ENCODE measurements at regions of chr5 and their contacts with region 1.

Region 1: DNA sequence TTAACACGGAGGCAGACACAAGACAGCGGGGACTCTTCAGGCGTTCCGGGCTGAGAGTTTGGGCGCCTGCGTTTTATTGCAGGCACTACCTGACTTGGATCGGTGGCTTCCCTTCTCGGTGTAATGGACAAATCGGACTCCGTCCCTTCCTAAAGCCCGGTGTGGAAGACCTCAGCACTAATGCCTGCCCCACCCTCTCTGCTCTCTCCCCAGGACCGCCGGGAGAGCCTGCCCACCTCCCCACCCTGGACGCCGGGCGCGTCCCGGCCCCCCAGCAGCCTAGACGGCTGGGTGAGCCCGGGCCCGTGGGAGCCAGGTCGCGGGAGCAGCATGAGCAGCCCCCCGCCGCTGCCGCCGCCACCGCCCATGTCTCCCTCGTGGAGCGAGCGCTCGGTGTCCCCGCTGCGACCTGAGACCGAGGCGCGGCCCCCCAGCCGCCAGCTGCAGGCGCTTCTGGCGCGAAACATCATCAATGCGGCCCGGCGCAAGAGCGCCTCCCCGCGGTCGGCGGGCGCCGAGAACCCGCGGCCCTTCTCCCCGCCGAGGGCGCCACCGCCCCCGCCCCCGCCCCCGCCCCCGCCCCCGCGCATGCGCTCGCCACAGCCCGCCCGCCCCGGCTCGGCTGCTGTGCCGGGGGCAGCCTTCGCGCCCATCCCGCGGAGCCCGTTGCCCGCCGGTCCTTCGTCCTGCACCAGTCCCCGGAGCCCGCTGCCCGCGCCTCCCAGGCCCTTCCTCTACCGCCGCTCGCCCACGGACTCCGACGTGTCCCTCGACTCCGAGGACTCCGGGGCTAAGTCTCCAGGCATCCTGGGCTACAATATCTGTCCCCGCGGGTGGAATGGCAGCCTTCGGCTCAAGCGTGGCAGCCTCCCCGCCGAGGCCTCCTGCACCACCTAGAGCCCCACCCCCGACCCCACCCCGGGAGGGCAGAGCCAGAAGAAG is 4.6 kb upstream of the MYOZ3 start:
- DNase-seq: peak; percentile 59 to 91 (median 82)
- ATAC-seq: peak; percentile 75 to 89 (median 88)
- H3K4me3 ChIP-seq: peak overlapping the region; percentile 8 to 55 (median 33)
- H3K27ac ChIP-seq: peak overlapping the region in 1 of 4 donors; percentile 41
- H3K4me1 ChIP-seq: no peaks in the 10 kb centered on the region
- H3K27me3 ChIP-seq: no peaks in the 10 kb centered on the region
- CTCF ChIP-seq: peak; percentile 41 to 56 (median 48)

Region 2: GRCh38 chr5:150419630-150420270 is 236.7 kb before region 1 on chr5:
- intact Hi-C with region 1: no loop called
- DNase-seq: no peak
- ATAC-seq: no peak
- H3K4me3 ChIP-seq: no peak overlapping the region
- H3K27ac ChIP-seq: no peak overlapping the region
- H3K4me1 ChIP-seq: no peaks in the 10 kb centered on the region
- H3K27me3 ChIP-seq: no peaks in the 10 kb centered on the region
- CTCF ChIP-seq: no peak

Region 3: GRCh38 chr5:150560401-150561193 is 95.9 kb before region 1 on chr5:
- intact Hi-C with region 1: loop called in 2 of 3 experiments (anchors 5 kb)
- DNase-seq: peak in 5 of 6 donors; percentile 71 to 92 (median 77)
- ATAC-seq: peak; percentile 87 to 96 (median 92)
- H3K4me3 ChIP-seq: no peak overlapping the region
- H3K27ac ChIP-seq: no peak overlapping the region
- H3K4me1 ChIP-seq: no peaks in the 10 kb centered on the region
- H3K27me3 ChIP-seq: no peaks in the 10 kb centered on the region
- CTCF ChIP-seq: peak; percentile 90 to 96 (median 94)

Region 4: DNA sequence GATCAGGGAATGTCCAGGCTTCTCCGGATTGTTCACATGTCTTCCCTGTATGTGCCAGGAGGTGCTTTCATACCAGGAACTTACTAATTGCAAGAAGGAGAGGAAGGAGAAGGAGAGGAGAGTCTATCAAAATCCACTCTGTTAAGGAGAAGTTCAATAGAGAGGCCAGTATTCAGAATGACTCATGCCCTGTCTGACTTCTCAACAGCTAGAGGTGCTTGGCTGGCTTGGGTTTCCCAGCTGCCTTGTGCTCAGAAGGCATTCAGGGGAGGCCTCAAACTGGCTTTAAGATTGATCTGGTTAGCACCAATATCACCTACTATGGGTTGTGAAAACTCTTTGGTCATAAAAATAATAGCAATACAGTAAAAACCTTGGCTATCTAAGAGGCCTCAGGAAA is 1436.1 kb after region 1 on chr5:
- intact Hi-C with region 1: no loop called
- DNase-seq: no peak
- ATAC-seq: peak in 1 of 4 donors; percentile 46
- H3K4me3 ChIP-seq: no peak overlapping the region
- H3K27ac ChIP-seq: no peak overlapping the region
- H3K4me1 ChIP-seq: no peaks in the 10 kb centered on the region
- H3K27me3 ChIP-seq: no peaks in the 10 kb centered on the region
- CTCF ChIP-seq: no peak